IMR-90 (cell line): ENCODE measurements at regions of chr3 and their contacts with region 1.

Region 1: DNA sequence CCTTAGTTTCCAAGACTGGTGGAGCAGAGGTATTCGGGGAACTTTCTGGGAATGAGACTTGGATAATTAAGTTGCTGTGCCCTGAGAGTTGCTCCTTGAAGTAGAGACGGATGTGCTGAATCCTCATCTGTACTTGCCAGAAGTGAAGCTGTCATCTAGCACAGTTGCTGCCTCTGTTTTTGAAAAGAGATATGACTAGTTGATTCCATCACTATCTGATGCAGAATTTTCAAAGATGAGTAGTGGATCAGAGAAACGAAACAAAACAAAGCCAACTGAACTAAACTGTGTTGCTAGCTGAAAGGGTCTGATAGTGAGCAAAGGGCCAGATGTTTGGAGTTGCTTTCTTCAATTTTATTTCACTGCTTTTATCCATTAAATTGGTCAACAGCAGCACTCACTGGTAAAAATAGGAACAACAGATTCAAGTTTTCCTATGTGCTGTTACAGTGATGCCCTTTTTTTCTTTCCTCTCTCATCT is 52.7 kb downstream of the MITF start:
- DNase-seq: peak; percentile 72
- ATAC-seq: peak; percentile 70
- H3K4me3 ChIP-seq: no peak overlapping the region
- H3K27ac ChIP-seq: peak overlapping the region; percentile 83; the same call in 1 of the 2 replicates
- H3K4me1 ChIP-seq: peaks cover 15% of the 10 kb centered on the region
- H3K27me3 ChIP-seq: no peaks in the 10 kb centered on the region
- CTCF ChIP-seq: peak; percentile 71
- POLR2A ChIP-seq: no peak
- RAD21 ChIP-seq: peak; percentile 83

Region 2: GRCh38 chr3:69439643-69440270 is 352.2 kb before region 1 on chr3:
- CTCF ChIA-PET with region 1: no interaction called
- POLR2A ChIA-PET with region 1: no interaction called
- dilution Hi-C with region 1: no loop called
- in situ Hi-C with region 1: no loop called
- intact Hi-C with region 1: loop called (anchors 5 kb)
- DNase-seq: peak; percentile 30
- ATAC-seq: peak; percentile 68
- H3K4me3 ChIP-seq: no peak overlapping the region
- H3K27ac ChIP-seq: no peak overlapping the region
- H3K4me1 ChIP-seq: peaks cover 4% of the 10 kb centered on the region; the same call in 1 of the 2 replicates
- H3K27me3 ChIP-seq: no peaks in the 10 kb centered on the region
- CTCF ChIP-seq: peak; percentile 60
- POLR2A ChIP-seq: no peak
- RAD21 ChIP-seq: peak; percentile 35; the same call in 1 of the 2 replicates

Region 3: GRCh38 chr3:69691860-69692259 is 100.1 kb before region 1 on chr3:
- CTCF ChIA-PET with region 1: interaction called, 16 read pairs
- POLR2A ChIA-PET with region 1: no interaction called
- dilution Hi-C with region 1: no loop called
- in situ Hi-C with region 1: loop called (anchors 5 kb)
- intact Hi-C with region 1: loop called (anchors 1 kb)
- DNase-seq: no peak
- ATAC-seq: no peak
- H3K4me3 ChIP-seq: no peak overlapping the region
- H3K27ac ChIP-seq: no peak overlapping the region
- H3K4me1 ChIP-seq: peaks cover 4% of the 10 kb centered on the region
- H3K27me3 ChIP-seq: peaks cover 3% of the 10 kb centered on the region
- CTCF ChIP-seq: no peak
- POLR2A ChIP-seq: no peak
- RAD21 ChIP-seq: no peak

Region 4: DNA sequence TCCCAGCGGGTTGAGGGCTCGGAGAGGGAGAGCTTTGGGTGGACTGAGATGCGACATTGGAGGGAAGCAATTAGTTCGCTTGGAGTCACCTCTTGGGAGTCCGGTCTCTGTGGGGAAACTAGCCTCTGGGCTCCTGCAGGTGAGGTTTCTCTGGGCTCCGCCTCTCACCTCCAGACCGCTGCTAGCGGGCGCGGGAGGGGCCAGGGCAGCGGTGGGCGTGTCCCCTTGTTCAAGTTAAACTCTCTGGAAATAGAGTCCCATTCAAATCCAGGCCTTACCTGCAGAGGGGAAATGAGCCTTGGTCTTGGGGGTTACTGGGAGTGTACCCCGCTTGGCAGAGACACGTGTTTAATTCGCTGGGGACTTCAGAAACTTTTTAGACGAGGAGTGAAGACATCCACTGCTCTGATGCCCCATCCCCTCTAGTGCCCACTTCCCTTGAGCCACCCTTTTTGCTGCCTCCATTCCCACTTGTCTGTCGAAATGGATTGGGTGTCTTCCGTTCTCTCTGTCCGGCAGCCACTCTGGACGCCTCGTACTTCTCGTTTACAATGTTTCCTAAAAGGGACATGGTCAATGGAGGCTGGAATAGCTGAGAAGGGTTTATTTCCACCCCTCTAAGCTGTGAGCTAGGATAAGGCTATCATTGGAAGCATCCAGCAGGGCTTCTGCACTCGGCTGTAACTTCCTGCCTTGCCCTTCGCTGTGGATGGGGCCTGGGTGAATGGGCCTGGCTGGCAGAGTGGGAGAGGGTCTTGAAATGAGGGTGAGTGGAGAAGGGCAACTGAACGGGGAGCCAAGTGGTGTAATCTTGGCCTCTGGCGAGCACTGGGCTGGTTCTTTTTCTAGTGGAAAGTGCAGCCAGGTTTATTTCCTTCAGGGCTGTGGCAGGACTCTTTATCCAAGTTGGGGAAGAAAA is 51.6 kb before region 1 on chr3:
- CTCF ChIA-PET with region 1: no interaction called
- POLR2A ChIA-PET with region 1: no interaction called
- dilution Hi-C with region 1: no loop called
- in situ Hi-C with region 1: no loop called
- intact Hi-C with region 1: no loop called
- DNase-seq: no peak
- ATAC-seq: no peak
- H3K4me3 ChIP-seq: peak overlapping the region; percentile 86
- H3K27ac ChIP-seq: no peak overlapping the region
- H3K4me1 ChIP-seq: peaks cover 6% of the 10 kb centered on the region; the same call in 1 of the 2 replicates
- H3K27me3 ChIP-seq: no peaks in the 10 kb centered on the region; the same call in 1 of the 2 replicates
- CTCF ChIP-seq: no peak
- POLR2A ChIP-seq: no peak
- RAD21 ChIP-seq: no peak

Region 5: DNA sequence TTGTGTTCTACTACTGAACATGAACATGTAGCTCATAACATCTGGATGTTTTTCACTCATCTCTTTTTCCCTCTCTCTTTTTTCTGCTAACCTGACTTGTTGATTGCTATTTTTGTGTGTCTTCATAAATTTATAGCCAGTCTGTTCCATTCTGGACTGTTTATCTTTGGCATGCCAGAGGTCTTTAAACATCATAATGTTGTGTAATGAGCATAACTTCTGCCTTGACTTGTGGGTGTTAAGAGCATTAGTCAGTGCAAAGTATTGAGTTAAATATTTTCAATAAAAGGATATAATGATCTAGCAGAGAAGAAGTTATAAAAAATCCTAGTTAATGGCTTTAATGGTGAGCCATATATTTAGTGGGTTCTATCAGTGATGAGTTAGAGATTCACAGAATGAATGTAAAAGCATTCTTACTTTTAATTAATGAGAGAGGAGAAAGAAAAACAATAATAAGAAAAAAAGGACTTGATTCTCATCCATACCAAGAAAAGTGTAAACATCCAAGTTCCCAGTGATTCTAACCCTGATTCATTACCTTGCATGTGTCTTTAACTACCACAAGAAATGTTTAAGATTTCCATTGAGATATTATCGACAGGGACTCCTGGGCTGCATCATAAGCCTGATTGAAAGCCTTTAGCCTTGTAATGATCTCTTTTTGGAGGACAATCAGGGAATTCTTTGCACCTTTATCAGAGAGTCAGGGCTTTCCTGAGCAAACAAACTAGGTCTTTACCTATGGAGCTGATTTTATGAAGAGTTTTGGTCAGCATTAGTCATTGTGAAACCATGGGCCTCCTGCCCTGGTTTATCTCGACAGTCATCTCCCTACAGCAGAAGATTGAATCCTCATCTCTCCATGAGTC is 29.8 kb before region 1 on chr3:
- CTCF ChIA-PET with region 1: interaction called, 10 read pairs
- POLR2A ChIA-PET with region 1: no interaction called
- dilution Hi-C with region 1: no loop called
- in situ Hi-C with region 1: no loop called
- intact Hi-C with region 1: no loop called
- DNase-seq: peak; percentile 88
- ATAC-seq: peak; percentile 82
- H3K4me3 ChIP-seq: no peak overlapping the region
- H3K27ac ChIP-seq: peak overlapping the region; percentile 65
- H3K4me1 ChIP-seq: peaks cover 24% of the 10 kb centered on the region
- H3K27me3 ChIP-seq: no peaks in the 10 kb centered on the region
- CTCF ChIP-seq: no peak
- POLR2A ChIP-seq: no peak
- RAD21 ChIP-seq: no peak